ENCODE measurements at regions of chr6 and their contacts with region 1.

Region 1: DNA sequence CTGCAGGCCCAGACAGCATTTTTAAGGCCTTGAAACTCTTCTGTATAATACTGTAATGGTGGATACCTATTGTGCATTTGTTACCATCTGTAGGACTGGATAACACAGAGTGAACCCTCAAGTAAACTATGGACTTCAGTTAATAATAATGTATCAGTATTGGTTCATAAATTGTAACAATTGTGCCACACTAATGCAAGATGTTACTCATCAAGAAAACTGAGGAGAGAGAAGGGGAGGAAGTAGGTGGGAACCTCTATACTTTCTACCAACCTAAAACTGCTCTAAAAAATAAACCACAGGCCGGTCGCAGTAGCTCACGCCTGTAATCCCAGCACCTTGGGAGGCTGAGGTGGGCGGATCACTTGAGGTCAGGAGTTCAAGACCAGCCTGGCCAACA is 10.8 kb downstream of the MAPK13 start:
- DNase-seq: no peak
- H3K4me3 Mint-ChIP-seq: no peak overlapping the region
- H3K27ac Mint-ChIP-seq: peak overlapping the region; percentile 35
- H3K4me1 Mint-ChIP-seq: peaks cover 25% of the 10 kb centered on the region
- H3K27me3 Mint-ChIP-seq: no peaks in the 10 kb centered on the region

Region 2: GRCh38 chr6:36098920-36099647 is 42.0 kb before region 1 on chr6:
- CTCF ChIA-PET with region 1: no interaction called
- intact Hi-C with region 1: no loop called
- DNase-seq: no peak
- H3K4me3 Mint-ChIP-seq: no peak overlapping the region
- H3K27ac Mint-ChIP-seq: no peak overlapping the region
- H3K4me1 Mint-ChIP-seq: peaks cover 34% of the 10 kb centered on the region
- H3K27me3 Mint-ChIP-seq: no peaks in the 10 kb centered on the region

Region 3: GRCh38 chr6:36169023-36170007 is 28.2 kb after region 1 on chr6:
- CTCF ChIA-PET with region 1: no interaction called
- intact Hi-C with region 1: loop called (anchors 1 kb)
- DNase-seq: no peak
- H3K4me3 Mint-ChIP-seq: no peak overlapping the region
- H3K27ac Mint-ChIP-seq: peak overlapping the region; percentile 38
- H3K4me1 Mint-ChIP-seq: peaks cover 25% of the 10 kb centered on the region
- H3K27me3 Mint-ChIP-seq: no peaks in the 10 kb centered on the region